ENCODE measurements at regions of chr11 and their contacts with region 1.

Region 1: DNA sequence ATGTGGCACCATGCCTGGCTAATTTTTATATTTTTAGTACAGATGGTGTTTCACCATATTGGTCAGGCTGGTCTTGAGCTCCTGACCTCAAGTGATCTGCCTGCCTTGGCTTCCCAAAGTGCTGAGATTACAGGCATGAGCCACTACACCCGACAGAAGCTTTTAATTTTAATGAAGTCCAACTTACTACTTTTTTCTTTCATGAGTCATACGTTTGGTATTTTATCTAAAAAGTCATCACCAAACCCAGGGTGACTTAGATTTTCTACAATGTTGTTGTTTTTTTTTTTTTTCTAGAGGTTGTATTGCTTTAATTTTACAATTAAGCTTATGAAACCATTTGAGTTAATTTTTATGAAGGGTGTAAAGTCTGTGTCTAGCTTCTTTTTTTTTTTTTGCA is 34.9 kb downstream of the JRKL start:
- DNase-seq: peak; percentile 5 to 75
- H3K4me3 ChIP-seq: no peak overlapping the region
- H3K27ac ChIP-seq: no peak overlapping the region
- H3K4me1 ChIP-seq: peaks cover 10% of the 10 kb centered on the region; the same call in 1 of the 2 replicates
- H3K27me3 ChIP-seq: no peaks in the 10 kb centered on the region
- CTCF ChIP-seq: no peak

Region 2: DNA sequence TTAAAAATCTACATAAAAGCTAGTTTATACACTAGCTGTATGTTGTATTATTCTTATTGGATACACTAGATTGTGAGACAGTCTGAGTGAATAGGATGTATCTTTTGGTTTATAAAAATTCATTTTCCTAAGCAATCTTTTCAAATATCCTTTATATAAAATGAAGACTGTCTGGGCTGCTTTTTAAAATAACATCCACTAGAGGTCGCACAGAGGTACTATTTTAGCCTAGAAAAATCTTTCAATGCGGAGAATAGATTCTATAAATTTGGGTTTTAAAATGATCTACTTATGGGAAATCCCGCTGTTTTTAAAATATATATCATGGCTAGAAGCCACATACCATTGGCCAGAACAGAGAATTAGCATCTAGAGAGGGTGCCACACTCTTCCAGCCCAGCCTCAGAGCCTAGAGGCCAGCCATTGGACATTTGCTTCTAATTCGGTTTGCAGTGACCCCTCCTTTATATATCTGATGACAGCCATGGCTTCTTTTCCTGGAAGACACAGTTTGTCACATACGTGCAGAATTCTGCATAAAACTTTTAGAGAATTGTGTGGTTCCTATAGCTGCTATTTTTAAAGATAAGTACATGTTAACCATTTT is 1905.1 kb before region 1 on chr11:
- CTCF ChIA-PET with region 1: no interaction called
- POLR2A ChIA-PET with region 1: no interaction called
- intact Hi-C with region 1: loop called (anchors 10 kb)
- DNase-seq: peak in 1 of 2 experiments; percentile 46
- H3K4me3 ChIP-seq: no peak overlapping the region
- H3K27ac ChIP-seq: no peak overlapping the region
- H3K4me1 ChIP-seq: no peaks in the 10 kb centered on the region
- H3K27me3 ChIP-seq: no peaks in the 10 kb centered on the region
- CTCF ChIP-seq: peak; percentile 91

Region 3: DNA sequence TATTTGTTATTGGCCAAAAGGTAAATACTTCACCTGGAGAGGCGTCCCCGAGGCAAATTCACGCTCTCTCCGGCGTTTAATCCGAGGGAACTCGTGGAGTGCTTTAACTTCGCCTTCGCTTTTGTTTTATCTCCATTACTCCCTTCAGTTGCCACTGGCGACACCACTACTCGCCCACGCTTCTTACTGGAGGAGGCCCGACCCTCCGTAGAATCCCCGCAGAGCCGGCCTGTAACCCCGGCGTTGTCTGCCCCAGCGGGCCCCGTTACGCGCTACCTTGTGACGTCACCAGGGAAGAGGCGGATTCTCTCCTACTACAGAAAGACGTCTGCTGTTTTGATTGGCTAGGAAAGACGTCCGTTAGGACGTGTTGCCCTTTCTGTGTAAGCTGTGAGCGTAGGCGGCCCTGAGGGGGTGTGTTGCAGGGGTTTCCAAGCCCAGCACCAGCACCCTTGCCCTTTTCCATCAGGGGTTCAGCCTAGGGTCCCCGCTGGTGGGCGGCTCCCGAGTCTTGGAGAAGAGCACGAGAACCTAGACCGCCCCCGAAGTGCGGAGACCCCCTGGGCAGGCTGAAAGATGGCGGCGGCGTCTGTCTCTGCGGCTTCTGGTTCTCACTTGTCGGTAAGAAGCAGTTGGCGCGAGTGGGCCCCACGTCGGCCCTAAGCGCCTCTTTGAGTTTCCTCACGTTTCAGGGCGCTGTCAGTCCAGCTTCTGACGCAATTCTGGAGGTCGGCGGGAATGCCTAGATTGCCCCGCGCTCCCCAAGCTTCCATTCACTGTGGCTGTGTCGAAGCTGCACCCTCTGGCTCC is 634.4 kb before region 1 on chr11 and contains the start of gene CEP57:
- CTCF ChIA-PET with region 1: interaction called, 4 read pairs
- POLR2A ChIA-PET with region 1: no interaction called
- intact Hi-C with region 1: loop called (anchors 5 kb)
- DNase-seq: peak; percentile 91 to 96
- H3K4me3 ChIP-seq: peak within 1 kb of the TSS; percentile 87
- H3K27ac ChIP-seq: peak within 1 kb of the TSS; percentile 85
- H3K4me1 ChIP-seq: peaks cover 26% of the 10 kb centered on the region
- H3K27me3 ChIP-seq: no peaks in the 10 kb centered on the region
- CTCF ChIP-seq: no peak
- total RNA-seq, gene CEP57: 62.1 and 64.5 TPM in 2 replicates

Region 4: GRCh38 chr11:95835768-95836488 is 588.8 kb before region 1 on chr11:
- CTCF ChIA-PET with region 1: interaction called, 4 read pairs
- POLR2A ChIA-PET with region 1: no interaction called
- intact Hi-C with region 1: loop called (anchors 2 kb)
- DNase-seq: peak; percentile 76 to 89
- H3K4me3 ChIP-seq: no peak overlapping the region
- H3K27ac ChIP-seq: peak overlapping the region; percentile 38
- H3K4me1 ChIP-seq: no peaks in the 10 kb centered on the region
- H3K27me3 ChIP-seq: no peaks in the 10 kb centered on the region
- CTCF ChIP-seq: peak; percentile 97

Region 5: DNA sequence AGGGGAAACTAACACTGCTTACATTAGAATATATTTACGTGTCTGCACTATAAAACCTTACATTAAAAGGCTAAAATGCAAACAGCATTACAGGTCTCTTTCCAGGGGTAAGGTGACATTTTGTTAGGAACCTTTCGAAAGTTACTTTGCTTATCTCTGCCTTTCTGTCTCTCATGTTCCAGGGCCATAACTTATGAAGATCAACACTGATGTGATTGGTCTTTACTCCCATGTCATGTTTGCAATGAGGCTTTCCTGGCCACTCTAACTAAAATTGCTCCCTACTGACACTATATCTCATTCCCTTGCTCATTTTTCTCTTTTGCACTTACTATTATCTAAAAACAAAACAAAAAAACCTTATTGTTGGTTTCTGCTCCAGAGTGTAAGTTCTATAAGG is 84.2 kb after region 1 on chr11:
- CTCF ChIA-PET with region 1: no interaction called
- POLR2A ChIA-PET with region 1: no interaction called
- intact Hi-C with region 1: no loop called
- DNase-seq: no peak
- H3K4me3 ChIP-seq: no peak overlapping the region
- H3K27ac ChIP-seq: no peak overlapping the region
- H3K4me1 ChIP-seq: no peaks in the 10 kb centered on the region
- H3K27me3 ChIP-seq: peaks cover 18% of the 10 kb centered on the region; the same call in 1 of the 2 replicates
- CTCF ChIP-seq: no peak

Measured in PC-9 (cell line).